ENCODE measurements at regions of chr7 and their contacts with region 1.

Region 1: GRCh38 chr7:7702826-7703225 is 15.6 kb downstream of the RPA3 start:
- DNase-seq: no peak
- H3K4me3 ChIP-seq: no peak overlapping the region
- H3K27ac ChIP-seq: no peak overlapping the region
- H3K4me1 ChIP-seq: peaks cover 0 to 54% (median 18%) of the 10 kb centered on the region in 4 donors
- H3K27me3 ChIP-seq: no peaks in the 10 kb centered on the region
- CTCF ChIP-seq: no peak

Region 2: GRCh38 chr7:7640221-7641128 is 62.4 kb before region 1 on chr7 and contains the start of gene UMAD1:
- intact Hi-C with region 1: loop called (anchors 2 kb)
- DNase-seq: peak; percentile 99
- H3K4me3 ChIP-seq: peak within 1 kb of the TSS; percentile 69 to 77
- H3K27ac ChIP-seq: peak within 1 kb of the TSS; percentile 86 to 90
- H3K4me1 ChIP-seq: peaks cover 0 to 15% (median 2%) of the 10 kb centered on the region in 4 donors
- H3K27me3 ChIP-seq: no peaks in the 10 kb centered on the region
- CTCF ChIP-seq: peak in 1 of 2 experiments; percentile 6

Measured in tibial artery (tissue), 4 donors.